Posterior vena cava (tissue), 2 donors: ENCODE measurements at regions of chr15 and their contacts with region 1.

Region 1: GRCh38 chr15:27592036-27592760 is 506.9 kb downstream of the OCA2 start:
- DNase-seq: no peak

Region 2: GRCh38 chr15:27730868-27731267 is 138.7 kb after region 1 on chr15:
- intact Hi-C with region 1: loop called in 1 of 2 experiments (anchors 10 kb)
- DNase-seq: no peak